SK-N-SH (cell line): ENCODE measurements at regions of chrX and their contacts with region 1.

Region 1: DNA sequence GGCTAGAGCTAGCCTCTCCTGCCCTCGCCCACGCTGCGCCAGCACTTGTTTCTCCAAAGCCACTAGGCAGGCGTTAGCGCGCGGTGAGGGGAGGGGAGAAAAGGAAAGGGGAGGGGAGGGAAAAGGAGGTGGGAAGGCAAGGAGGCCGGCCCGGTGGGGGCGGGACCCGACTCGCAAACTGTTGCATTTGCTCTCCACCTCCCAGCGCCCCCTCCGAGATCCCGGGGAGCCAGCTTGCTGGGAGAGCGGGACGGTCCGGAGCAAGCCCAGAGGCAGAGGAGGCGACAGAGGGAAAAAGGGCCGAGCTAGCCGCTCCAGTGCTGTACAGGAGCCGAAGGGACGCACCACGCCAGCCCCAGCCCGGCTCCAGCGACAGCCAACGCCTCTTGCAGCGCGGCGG is at the start of gene AR:
- DNase-seq: peak; percentile 5
- H3K4me3 ChIP-seq: peak within 1 kb of the TSS in 1 of 2 experiments; percentile 29; a peak in 2 of 4 replicates
- H3K27ac ChIP-seq: no peak within 1 kb of the TSS
- H3K4me1 ChIP-seq: no peaks in the 10 kb centered on the region
- H3K27me3 ChIP-seq: peaks cover 38% of the 10 kb centered on the region
- CTCF ChIP-seq: no peak
- EP300 ChIP-seq: no peak
- RAD21 ChIP-seq: no peak
- polyA plus RNA-seq, gene AR: not detected in 2 replicates

Region 2: DNA sequence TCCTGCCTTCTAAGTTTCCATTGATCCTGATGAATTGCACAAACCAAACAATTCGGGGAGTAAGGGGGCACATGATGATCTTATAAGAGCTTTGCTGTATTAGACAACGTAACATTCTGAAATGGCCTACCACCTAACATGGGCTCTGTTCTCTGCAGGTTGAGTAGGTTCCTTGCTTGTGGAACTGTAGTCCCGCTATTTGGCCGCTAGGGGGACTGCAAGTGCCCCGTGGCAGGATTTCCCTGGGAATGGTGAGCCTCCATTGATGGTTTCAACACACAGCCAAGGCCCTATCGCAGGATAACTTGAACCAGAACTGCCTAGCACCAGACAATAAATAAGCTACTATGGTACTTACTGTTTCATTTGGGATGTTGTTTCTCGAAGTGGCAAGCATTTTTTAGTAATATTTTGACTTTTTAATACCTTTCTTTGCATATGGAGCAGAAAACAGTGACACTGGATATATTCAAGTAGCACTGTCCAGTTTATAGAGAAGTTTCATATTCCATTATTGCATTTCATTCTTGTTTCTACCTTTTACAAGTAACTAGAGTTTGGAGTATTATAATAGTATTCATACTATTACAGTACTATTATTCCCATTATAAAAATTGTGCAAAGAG is 11.9 kb after region 1 on chrX:
- CTCF ChIA-PET with region 1: interaction called, 14 read pairs
- POLR2A ChIA-PET with region 1: no interaction called
- DNase-seq: peak; percentile 45
- H3K4me3 ChIP-seq: 0 out of 4 replicates have a peak overlapping the region, but pooled peaks of 1 of the 2 experiments have one; percentile 19
- H3K27ac ChIP-seq: no peak overlapping the region
- H3K4me1 ChIP-seq: no peaks in the 10 kb centered on the region
- H3K27me3 ChIP-seq: no peaks in the 10 kb centered on the region
- CTCF ChIP-seq: peak; percentile 78
- EP300 ChIP-seq: no peak
- RAD21 ChIP-seq: peak; percentile 50

Region 3: DNA sequence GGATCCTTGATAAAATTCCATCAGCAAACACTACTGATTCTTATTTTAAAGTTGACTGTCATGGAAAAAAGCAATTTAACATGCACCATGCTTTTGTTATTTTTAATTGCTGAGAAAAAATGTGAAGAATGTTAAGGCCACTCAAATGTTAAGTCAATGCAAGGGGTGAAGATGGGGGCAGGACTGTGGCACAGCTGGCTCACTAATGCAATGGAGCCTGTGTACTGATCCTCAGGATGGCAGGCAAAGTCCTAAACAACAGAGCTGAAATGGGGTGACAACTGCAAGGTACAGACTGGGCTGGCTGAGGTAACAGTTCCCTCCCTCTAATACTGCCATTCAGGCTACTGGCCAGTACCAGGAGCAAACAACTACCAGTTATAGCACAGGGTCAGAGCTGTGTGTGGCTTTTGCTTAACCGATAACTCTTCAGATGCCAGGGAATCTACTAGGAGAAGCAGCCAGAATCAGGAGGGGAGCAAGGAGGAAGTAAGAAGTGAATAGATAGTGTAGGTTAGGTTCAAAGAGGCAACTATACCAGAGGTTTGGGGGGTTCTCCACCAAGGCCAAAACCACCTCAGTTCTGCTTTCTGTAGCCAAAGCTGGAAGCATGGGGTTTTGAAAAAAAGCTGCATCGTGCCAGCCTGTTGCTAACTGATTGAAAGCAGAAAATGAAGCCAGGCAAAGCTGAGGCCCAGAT is 516.8 kb after region 1 on chrX:
- CTCF ChIA-PET with region 1: no interaction called
- POLR2A ChIA-PET with region 1: no interaction called
- DNase-seq: no peak
- H3K4me3 ChIP-seq: no peak overlapping the region
- H3K27ac ChIP-seq: peak overlapping the region in 1 of 2 experiments; percentile 28; a peak in 1 of 4 replicates
- H3K4me1 ChIP-seq: peaks cover 0 to 4% of the 10 kb centered on the region in 2 experiments; a peak in 1 of 4 replicates
- H3K27me3 ChIP-seq: no peaks in the 10 kb centered on the region
- CTCF ChIP-seq: no peak
- EP300 ChIP-seq: no peak
- RAD21 ChIP-seq: no peak